GM12878 (cell line): ENCODE measurements at regions of chr1 and their contacts with region 1.

Region 1: DNA sequence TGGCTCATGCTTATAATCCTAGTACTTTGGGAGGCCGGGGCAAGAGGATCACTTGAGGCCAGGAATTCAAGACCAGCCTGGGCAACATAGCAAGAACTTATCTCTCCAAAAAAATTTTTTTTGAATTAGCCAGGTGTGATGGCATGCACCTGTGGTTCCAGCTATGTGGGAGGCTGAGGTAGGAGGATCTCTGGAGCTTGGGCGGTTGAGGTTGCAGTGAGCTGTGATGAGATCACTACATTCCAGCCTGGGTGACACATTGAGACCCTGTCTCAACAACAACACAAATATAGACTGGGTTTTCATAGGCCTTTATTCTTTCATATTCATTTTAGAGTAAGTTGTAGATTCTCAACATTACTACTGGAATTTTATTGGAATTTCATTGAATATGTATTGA is 12.8 kb downstream of the MED18 start:
- DNase-seq: no peak
- ATAC-seq: no peak
- H3K4me3 ChIP-seq: no peak overlapping the region
- H3K27ac ChIP-seq: no peak overlapping the region
- H3K4me1 ChIP-seq: no peaks in the 10 kb centered on the region
- H3K27me3 ChIP-seq: no peaks in the 10 kb centered on the region
- CTCF ChIP-seq: no peak
- EP300 ChIP-seq: no peak
- POLR2A ChIP-seq: no peak
- RAD21 ChIP-seq: no peak

Region 2: GRCh38 chr1:28329395-28330153 is 12.0 kb before region 1 on chr1:
- CTCF ChIA-PET with region 1: interaction called, 3 read pairs
- POLR2A ChIA-PET with region 1: interaction called, 12 read pairs
- RAD21 ChIA-PET with region 1: interaction called, 3 read pairs
- SMC1A ChIA-PET with region 1: interaction called, 4 read pairs
- in situ Hi-C with region 1: no loop called
- intact Hi-C with region 1: no loop called
- DNase-seq: no peak
- ATAC-seq: peak; percentile 69
- H3K4me3 ChIP-seq: peak overlapping the region; percentile 76
- H3K27ac ChIP-seq: peak overlapping the region; percentile 91
- H3K4me1 ChIP-seq: peaks cover 11% of the 10 kb centered on the region
- H3K27me3 ChIP-seq: no peaks in the 10 kb centered on the region
- CTCF ChIP-seq: no peak
- EP300 ChIP-seq: no peak
- POLR2A ChIP-seq: no peak
- RAD21 ChIP-seq: no peak